ENCODE measurements at regions of chr10 and their contacts with region 1.

Region 1: DNA sequence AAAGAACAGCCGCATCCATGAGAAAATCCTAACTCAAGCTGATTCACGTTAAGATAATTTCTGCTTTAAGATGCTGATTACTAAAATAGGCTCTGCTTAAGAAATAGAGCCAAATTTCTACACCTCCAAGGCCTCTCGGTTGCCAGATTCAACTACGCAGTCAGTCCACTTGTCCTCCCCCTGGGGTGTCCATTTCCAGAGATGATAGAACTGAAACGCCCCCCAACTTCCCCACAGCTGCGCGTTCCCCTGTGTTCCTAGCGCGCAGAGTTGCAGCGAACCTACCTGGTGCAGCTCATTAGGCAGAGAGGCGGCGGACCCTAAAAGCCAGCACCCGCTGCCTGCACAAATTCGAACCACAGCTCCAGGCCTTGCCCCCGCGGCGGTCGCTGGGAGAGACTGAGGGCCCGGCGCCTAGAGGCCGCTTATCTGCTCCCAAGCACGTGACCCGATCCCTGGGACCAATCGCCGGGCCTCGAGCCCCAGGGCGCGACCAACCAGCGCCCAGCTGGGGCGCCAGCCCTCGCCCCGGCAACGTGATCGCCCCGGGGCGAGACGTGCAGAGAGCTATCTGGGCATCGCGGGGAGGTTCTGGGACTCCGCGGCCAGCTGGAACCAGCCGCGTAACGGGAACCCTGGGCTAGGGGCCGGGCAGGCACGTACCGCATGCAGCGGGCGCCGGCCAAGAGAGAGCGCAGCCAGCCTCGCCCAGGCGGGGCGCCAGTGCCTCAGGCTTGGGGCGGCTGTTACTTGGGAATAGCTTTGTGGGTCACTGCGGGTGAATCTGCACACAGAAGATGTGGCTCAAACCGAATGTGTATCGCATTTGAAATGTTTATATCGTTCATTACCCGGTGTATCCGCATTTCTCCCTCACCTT is at the start of gene PPP1R3C:
- DNase-seq: peak; percentile 92
- ATAC-seq: peak; percentile 94
- H3K4me3 ChIP-seq: peak within 1 kb of the TSS; percentile 77
- H3K27ac ChIP-seq: peak within 1 kb of the TSS; percentile 67
- H3K4me1 ChIP-seq: peaks cover 6% of the 10 kb centered on the region
- H3K27me3 ChIP-seq: no peaks in the 10 kb centered on the region
- CTCF ChIP-seq: peak; percentile 43
- POLR2A ChIP-seq: peak; percentile 98
- RAD21 ChIP-seq: peak; percentile 57
- total RNA-seq, gene PPP1R3C: 61.7 and 62.9 TPM in 2 replicates

Region 2: DNA sequence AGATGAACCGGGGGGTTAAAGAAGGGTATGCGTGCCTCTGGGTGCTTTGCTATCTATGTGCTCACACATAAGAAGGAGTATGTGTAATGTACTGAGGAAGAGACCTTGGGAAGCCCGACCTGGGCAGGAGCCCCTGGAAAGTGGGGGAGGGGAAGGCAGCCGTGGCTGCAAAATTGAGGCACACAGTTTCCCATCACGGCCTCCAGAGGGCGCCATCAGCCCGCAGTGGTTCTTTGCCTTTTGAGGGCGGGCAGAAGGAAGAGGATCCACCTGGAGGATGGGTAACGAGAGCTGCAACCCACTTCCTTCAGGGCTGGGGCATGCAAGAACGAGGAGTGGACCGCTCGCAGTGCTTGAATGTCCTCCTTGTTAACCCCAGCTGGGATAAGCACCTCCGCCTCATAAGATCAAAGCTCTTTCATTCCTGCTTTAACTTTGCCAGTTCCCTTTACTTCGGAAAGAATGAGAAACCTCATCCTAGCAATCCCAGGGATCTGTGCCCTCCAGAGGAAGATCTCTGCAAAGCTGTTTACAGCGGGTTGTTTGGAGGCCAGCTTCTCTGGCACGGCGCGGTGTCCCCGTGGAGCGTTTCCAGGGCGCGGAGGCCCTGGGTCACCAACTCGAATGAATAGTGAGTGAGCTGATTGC is 334.6 kb before region 1 on chr10:
- CTCF ChIA-PET with region 1: interaction called, 19 read pairs
- POLR2A ChIA-PET with region 1: interaction called, 7 read pairs
- dilution Hi-C with region 1: no loop called
- in situ Hi-C with region 1: loop called (anchors 10 kb)
- intact Hi-C with region 1: loop called (anchors 1 kb)
- DNase-seq: peak; percentile 81
- ATAC-seq: peak; percentile 91
- H3K4me3 ChIP-seq: peak overlapping the region; percentile 38
- H3K27ac ChIP-seq: peak overlapping the region; percentile 44
- H3K4me1 ChIP-seq: peaks cover 7% of the 10 kb centered on the region
- H3K27me3 ChIP-seq: no peaks in the 10 kb centered on the region
- CTCF ChIP-seq: peak; percentile 97
- POLR2A ChIP-seq: 0 out of 2 replicates have a peak, but pooled peaks have one; percentile 53
- RAD21 ChIP-seq: peak; percentile 97

Region 3: GRCh38 chr10:91409869-91410637 is 222.9 kb before region 1 on chr10 and contains the start of gene HECTD2:
- CTCF ChIA-PET with region 1: no interaction called
- POLR2A ChIA-PET with region 1: no interaction called
- dilution Hi-C with region 1: no loop called
- in situ Hi-C with region 1: no loop called
- intact Hi-C with region 1: loop called (anchors 1 kb)
- DNase-seq: peak; percentile 65
- ATAC-seq: peak; percentile 80
- H3K4me3 ChIP-seq: peak within 1 kb of the TSS; percentile 83
- H3K27ac ChIP-seq: peak within 1 kb of the TSS; percentile 98
- H3K4me1 ChIP-seq: no peaks in the 10 kb centered on the region
- H3K27me3 ChIP-seq: no peaks in the 10 kb centered on the region
- CTCF ChIP-seq: peak; percentile 57
- POLR2A ChIP-seq: peak; percentile 64; the same call in 1 of the 2 replicates
- RAD21 ChIP-seq: peak; percentile 27
- total RNA-seq, gene HECTD2: 5.9 and 10.3 TPM in 2 replicates

Region 4: DNA sequence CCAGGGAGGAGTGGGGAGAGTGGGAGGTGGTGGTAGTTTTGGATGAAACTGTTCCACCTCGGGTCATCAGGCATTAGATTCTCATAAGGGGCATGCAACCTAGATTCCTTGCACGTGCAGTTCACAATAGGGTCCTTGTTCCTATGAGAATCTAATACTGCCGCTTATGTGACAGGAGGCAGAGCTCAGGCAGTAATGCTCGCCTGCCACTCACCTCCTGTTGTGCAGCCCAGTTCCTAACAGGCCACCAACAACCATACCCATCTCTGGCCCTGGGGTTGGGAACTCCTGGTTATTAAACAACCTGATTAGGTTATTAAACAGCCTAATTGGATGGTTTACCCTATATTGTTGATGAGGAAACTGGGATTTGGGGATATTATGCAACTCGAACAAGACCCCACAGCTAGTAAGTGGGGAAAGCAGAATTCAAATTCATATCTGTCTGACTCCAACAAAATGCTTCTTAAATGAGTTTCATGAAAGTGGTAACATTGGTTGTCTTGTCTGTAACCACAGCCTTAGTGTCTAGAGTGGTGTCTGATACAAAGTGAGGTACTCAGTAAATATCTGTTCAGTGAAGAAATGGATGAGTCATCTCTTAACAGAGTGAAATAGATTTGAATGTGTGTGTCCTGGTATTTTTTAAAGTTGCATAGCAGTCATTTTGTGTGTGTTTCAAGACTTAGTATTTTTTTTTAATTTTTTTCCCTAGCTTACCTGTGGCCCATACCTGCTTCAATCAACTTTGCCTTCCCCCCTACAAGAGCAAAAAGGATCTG is 121.2 kb before region 1 on chr10:
- CTCF ChIA-PET with region 1: no interaction called
- POLR2A ChIA-PET with region 1: no interaction called
- dilution Hi-C with region 1: no loop called
- in situ Hi-C with region 1: no loop called
- intact Hi-C with region 1: loop called (anchors 5 kb)
- DNase-seq: peak; percentile 90
- ATAC-seq: peak; percentile 93
- H3K4me3 ChIP-seq: no peak overlapping the region
- H3K27ac ChIP-seq: peak overlapping the region; percentile 73
- H3K4me1 ChIP-seq: peaks cover 10% of the 10 kb centered on the region
- H3K27me3 ChIP-seq: no peaks in the 10 kb centered on the region
- CTCF ChIP-seq: no peak
- POLR2A ChIP-seq: no peak
- RAD21 ChIP-seq: no peak

Region 5: GRCh38 chr10:91590142-91590903 is 42.6 kb before region 1 on chr10:
- CTCF ChIA-PET with region 1: interaction called, 4 read pairs
- POLR2A ChIA-PET with region 1: interaction called, 9 read pairs
- dilution Hi-C with region 1: no loop called
- in situ Hi-C with region 1: no loop called
- intact Hi-C with region 1: loop called (anchors 1 kb)
- DNase-seq: peak; percentile 92
- ATAC-seq: peak; percentile 79
- H3K4me3 ChIP-seq: no peak overlapping the region
- H3K27ac ChIP-seq: peak overlapping the region; percentile 92
- H3K4me1 ChIP-seq: peaks cover 37% of the 10 kb centered on the region
- H3K27me3 ChIP-seq: no peaks in the 10 kb centered on the region
- CTCF ChIP-seq: no peak
- POLR2A ChIP-seq: no peak
- RAD21 ChIP-seq: no peak

Region 6: DNA sequence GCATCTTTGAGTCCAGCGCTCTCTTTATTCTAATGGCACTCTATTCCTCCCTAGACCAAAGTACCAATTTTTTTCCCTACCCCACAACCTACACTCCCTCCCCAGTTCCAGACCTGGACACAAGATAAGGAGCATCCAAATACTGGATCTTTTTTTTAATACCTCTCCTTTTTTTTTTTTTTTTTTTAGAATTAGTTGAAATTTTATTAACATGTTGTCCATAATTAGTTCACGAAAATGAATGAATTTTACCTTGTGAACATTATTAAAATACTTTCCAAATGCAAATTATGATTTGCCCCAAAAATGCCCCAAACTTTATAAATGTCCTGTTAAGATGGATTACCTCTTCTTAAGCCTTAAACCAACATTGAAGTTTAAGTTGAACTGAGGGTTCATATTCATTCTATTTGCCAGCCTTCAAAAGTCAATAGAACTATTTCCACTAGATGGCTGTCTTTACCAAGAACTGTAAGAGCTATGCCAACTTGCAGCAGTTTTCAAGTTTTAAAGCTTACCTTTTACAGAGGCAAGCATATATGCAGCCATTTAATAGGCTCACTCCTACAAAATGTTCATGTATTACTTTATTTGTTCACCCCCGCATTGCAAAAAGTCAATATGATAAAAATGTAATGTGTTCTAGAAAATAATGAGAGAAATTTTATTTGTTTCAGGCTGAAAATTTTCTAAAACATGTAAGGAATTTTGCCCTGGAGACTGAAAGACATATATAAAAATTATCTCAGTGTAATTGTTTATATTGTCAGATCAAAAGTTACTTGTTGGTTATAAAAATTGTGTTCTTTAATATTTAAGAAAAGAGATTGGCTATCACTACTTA is 125.6 kb after region 1 on chr10:
- CTCF ChIA-PET with region 1: interaction called, 6 read pairs
- POLR2A ChIA-PET with region 1: no interaction called
- dilution Hi-C with region 1: no loop called
- in situ Hi-C with region 1: no loop called
- intact Hi-C with region 1: loop called (anchors 2 kb)
- DNase-seq: peak; percentile 75
- ATAC-seq: peak; percentile 65
- H3K4me3 ChIP-seq: no peak overlapping the region
- H3K27ac ChIP-seq: no peak overlapping the region
- H3K4me1 ChIP-seq: peaks cover 8% of the 10 kb centered on the region
- H3K27me3 ChIP-seq: no peaks in the 10 kb centered on the region; the same call in 1 of the 2 replicates
- CTCF ChIP-seq: peak; percentile 64
- POLR2A ChIP-seq: no peak
- RAD21 ChIP-seq: peak; percentile 74

Region 7: GRCh38 chr10:91908337-91909116 is 275.6 kb after region 1 on chr10:
- CTCF ChIA-PET with region 1: interaction called, 8 read pairs
- POLR2A ChIA-PET with region 1: no interaction called
- dilution Hi-C with region 1: no loop called
- in situ Hi-C with region 1: no loop called
- intact Hi-C with region 1: loop called (anchors 1 kb)
- DNase-seq: peak; percentile 67
- ATAC-seq: peak; percentile 91
- H3K4me3 ChIP-seq: peak overlapping the region; percentile 72
- H3K27ac ChIP-seq: peak overlapping the region; percentile 24; the same call in 1 of the 2 replicates
- H3K4me1 ChIP-seq: no peaks in the 10 kb centered on the region
- H3K27me3 ChIP-seq: no peaks in the 10 kb centered on the region
- CTCF ChIP-seq: peak; percentile 38
- POLR2A ChIP-seq: no peak
- RAD21 ChIP-seq: no peak; the same call in 1 of the 2 replicates

Measured in IMR-90 (cell line).